Activated CD8-positive, alpha-beta T cell treated with anti-CD3 and anti-CD28 coated beads for 36 hours (primary cell): ENCODE measurements at regions of chr15 and their contacts with region 1.

Region 1: DNA sequence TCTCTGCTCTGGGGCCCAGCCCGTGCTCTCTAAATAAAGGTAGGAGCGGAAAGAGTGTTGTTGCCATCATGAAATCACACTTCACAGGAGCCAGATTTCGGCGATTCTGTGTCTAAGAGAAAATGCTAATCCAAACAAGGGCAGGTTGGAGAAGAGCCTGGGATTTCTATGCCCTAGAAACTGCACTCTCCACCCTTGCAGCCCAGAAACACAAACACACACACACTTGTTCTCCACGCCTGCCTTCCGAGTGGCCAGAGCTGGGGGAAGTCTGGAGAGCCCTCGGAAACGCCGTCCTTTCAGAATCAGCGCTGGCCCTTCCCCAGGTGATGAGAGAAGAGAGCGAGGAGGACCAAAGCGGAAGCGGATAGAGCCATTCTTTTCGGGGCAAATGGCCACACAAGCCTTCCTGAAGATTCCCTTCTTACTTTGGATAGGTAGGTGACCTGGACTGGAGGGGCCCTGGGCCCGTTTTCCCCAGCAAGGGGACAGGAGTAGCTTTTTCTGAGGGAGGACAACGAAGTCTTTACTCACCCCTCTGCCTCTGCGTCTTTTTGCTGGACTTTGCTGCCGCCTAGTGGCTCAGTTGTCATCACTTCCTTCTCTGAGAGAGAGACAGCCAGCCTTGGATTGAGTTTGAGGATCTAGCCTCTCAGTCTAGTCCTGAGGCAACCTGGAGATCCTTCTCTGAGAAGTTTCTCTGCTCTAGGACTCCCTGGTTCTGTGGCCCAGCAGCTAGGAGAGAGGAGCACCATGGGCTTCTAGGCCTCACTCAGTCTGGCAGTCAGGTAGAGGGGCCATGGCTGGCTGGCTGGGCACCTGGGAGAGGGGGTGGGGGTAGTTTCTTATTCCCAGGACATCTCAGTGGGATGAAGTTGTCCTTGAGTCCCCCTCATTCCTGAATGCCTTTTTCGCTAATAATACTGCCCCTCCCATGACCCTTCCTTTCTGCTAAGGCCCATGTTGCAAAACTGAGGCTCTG is 37.7 kb downstream of the SENP8 start:
- DNase-seq: peak; percentile 89
- ATAC-seq: peak; percentile 95
- H3K4me3 Mint-ChIP-seq: peak overlapping the region; percentile 68
- H3K27ac Mint-ChIP-seq: no peak overlapping the region
- H3K4me1 Mint-ChIP-seq: no peaks in the 10 kb centered on the region
- H3K27me3 Mint-ChIP-seq: no peaks in the 10 kb centered on the region
- CTCF ChIP-seq: peak; percentile 87

Region 2: GRCh38 chr15:71743861-71744382 is 412.0 kb before region 1 on chr15:
- CTCF ChIA-PET with region 1: interaction called, 26 read pairs
- POLR2A ChIA-PET with region 1: no interaction called
- intact Hi-C with region 1: loop called (anchors 5 kb)
- DNase-seq: peak; percentile 69
- ATAC-seq: peak; percentile 20
- H3K4me3 Mint-ChIP-seq: no peak overlapping the region
- H3K27ac Mint-ChIP-seq: no peak overlapping the region
- H3K4me1 Mint-ChIP-seq: peaks cover 3% of the 10 kb centered on the region
- H3K27me3 Mint-ChIP-seq: peaks cover 4% of the 10 kb centered on the region
- CTCF ChIP-seq: peak; percentile 82

Region 3: GRCh38 chr15:71752604-71753289 is 403.2 kb before region 1 on chr15:
- CTCF ChIA-PET with region 1: interaction called, 27 read pairs
- POLR2A ChIA-PET with region 1: no interaction called
- intact Hi-C with region 1: no loop called
- DNase-seq: peak; percentile 48
- ATAC-seq: peak; percentile 53
- H3K4me3 Mint-ChIP-seq: no peak overlapping the region
- H3K27ac Mint-ChIP-seq: no peak overlapping the region
- H3K4me1 Mint-ChIP-seq: no peaks in the 10 kb centered on the region
- H3K27me3 Mint-ChIP-seq: peaks cover 12% of the 10 kb centered on the region
- CTCF ChIP-seq: peak; percentile 7

Region 4: DNA sequence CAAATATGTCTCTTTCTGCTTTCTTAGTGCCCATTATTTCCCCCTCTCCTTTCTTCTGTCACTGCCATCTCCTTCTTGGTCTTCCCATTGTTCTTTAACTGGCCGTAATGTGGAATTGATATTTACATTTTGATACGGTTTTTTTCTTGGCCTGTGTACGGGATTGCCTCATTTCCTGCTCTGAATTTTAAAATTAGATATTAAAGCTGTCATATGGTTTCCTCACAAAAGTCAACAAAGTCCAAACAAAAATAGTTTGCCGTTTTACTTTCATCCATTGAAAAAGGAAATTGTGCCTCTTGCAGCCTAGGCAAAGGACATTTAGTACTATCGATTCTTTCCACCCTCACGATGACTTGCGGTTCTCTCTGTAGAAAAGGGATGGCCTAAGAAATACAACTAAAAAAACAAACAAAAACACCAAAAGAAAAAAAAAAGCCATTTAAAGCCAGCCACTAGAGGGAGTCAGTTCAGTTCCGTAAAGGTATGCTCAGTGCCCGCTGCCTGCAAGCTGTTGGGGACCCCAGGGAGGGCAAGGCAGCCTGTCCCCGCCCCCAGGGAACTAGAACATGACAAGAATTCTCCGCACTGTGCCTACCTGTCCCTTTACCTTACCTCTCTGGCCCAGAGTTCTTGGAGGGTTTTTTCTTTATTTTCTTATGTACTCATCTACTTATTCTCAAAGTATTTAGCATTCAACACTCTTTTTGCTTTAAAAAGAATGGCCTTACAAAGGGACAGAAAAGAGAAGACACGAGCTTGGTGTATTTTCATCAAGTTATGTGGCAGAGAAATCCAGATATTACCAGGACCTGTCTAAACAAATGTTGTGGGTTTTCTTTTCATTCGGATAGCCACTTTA is 375.6 kb before region 1 on chr15:
- CTCF ChIA-PET with region 1: interaction called, 35 read pairs
- POLR2A ChIA-PET with region 1: no interaction called
- intact Hi-C with region 1: loop called (anchors 5 kb)
- DNase-seq: peak; percentile 46
- ATAC-seq: peak; percentile 66
- H3K4me3 Mint-ChIP-seq: no peak overlapping the region
- H3K27ac Mint-ChIP-seq: no peak overlapping the region
- H3K4me1 Mint-ChIP-seq: peaks cover 6% of the 10 kb centered on the region
- H3K27me3 Mint-ChIP-seq: peaks cover 6% of the 10 kb centered on the region
- CTCF ChIP-seq: peak; percentile 82

Region 5: GRCh38 chr15:71800835-71801745 is 354.8 kb before region 1 on chr15:
- CTCF ChIA-PET with region 1: interaction called, 19 read pairs
- POLR2A ChIA-PET with region 1: no interaction called
- intact Hi-C with region 1: no loop called
- DNase-seq: peak; percentile 31
- ATAC-seq: peak; percentile 56
- H3K4me3 Mint-ChIP-seq: no peak overlapping the region
- H3K27ac Mint-ChIP-seq: no peak overlapping the region
- H3K4me1 Mint-ChIP-seq: no peaks in the 10 kb centered on the region
- H3K27me3 Mint-ChIP-seq: peaks cover 21% of the 10 kb centered on the region
- CTCF ChIP-seq: peak; percentile 70

Region 6: GRCh38 chr15:72168111-72168808 is 12.3 kb after region 1 on chr15:
- CTCF ChIA-PET with region 1: interaction called, 13 read pairs
- POLR2A ChIA-PET with region 1: no interaction called
- intact Hi-C with region 1: no loop called
- DNase-seq: peak; percentile 47
- ATAC-seq: peak; percentile 83
- H3K4me3 Mint-ChIP-seq: no peak overlapping the region
- H3K27ac Mint-ChIP-seq: no peak overlapping the region
- H3K4me1 Mint-ChIP-seq: peaks cover 6% of the 10 kb centered on the region
- H3K27me3 Mint-ChIP-seq: no peaks in the 10 kb centered on the region
- CTCF ChIP-seq: no peak

Region 7: GRCh38 chr15:72285927-72286516 is 130.1 kb after region 1 on chr15:
- CTCF ChIA-PET with region 1: no interaction called
- POLR2A ChIA-PET with region 1: no interaction called
- intact Hi-C with region 1: no loop called
- DNase-seq: peak; percentile 56
- ATAC-seq: peak; percentile 72
- H3K4me3 Mint-ChIP-seq: no peak overlapping the region
- H3K27ac Mint-ChIP-seq: no peak overlapping the region
- H3K4me1 Mint-ChIP-seq: peaks cover 4% of the 10 kb centered on the region
- H3K27me3 Mint-ChIP-seq: no peaks in the 10 kb centered on the region
- CTCF ChIP-seq: peak; percentile 66